Common myeloid progenitor, CD34-positive (primary cell): ENCODE measurements at regions of chr21 and their contacts with region 1.

Region 1: GRCh38 chr21:34603002-34603709 is 11.8 kb downstream of the RCAN1 start:
- DNase-seq: peak; percentile 63 to 83 (median 80)
- H3K4me3 ChIP-seq: no peak overlapping the region
- H3K27ac ChIP-seq: no peak overlapping the region
- H3K4me1 ChIP-seq: no peaks in the 10 kb centered on the region
- H3K27me3 ChIP-seq: no peaks in the 10 kb centered on the region

Region 2: GRCh38 chr21:34510148-34511142 is 92.7 kb before region 1 on chr21:
- CTCF ChIA-PET with region 1: interaction called, 44 read pairs
- POLR2A ChIA-PET with region 1: no interaction called
- DNase-seq: peak; percentile 57 to 79 (median 69)
- H3K4me3 ChIP-seq: no peak overlapping the region
- H3K27ac ChIP-seq: no peak overlapping the region
- H3K4me1 ChIP-seq: peaks cover 0 to 15% (median 1%) of the 10 kb centered on the region in 4 experiments
- H3K27me3 ChIP-seq: no peaks in the 10 kb centered on the region

Region 3: DNA sequence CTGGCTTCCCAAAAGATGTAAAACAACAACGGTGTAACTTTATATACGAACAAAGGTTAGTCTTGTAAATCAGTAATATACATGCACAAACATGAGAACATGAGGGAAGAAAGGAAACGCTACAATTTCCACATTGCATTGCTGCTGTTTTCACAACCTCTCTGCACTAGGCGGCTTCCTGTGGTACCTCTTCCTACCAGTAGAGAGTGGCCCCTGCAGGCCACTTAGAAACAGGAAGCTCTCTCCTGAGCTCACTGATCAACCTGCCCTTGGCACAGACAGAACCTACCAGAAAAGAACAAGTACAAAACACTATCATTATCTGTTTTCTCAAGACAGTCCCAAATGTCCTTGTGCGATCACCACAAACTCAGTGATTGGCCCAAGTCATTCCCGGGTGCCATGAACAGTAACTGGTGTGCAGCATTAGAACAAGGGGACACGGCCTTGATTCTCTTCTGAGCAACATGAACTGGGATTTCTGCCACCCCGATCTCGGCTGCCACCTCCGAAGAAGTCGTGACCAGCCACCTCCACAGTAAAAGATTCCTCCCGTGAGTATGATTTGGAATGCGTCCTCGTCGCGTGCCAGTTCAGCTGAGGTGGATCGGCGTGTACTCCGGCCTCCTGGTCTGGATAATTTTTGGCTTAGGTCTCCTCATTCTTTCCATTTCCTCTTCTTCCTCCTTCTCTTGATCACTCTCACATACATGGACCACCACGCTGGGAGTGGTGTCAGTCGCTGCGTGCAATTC is 85.5 kb before region 1 on chr21:
- CTCF ChIA-PET with region 1: interaction called, 14 read pairs
- POLR2A ChIA-PET with region 1: no interaction called
- DNase-seq: peak in 2 of 3 donors; percentile 55 to 64
- H3K4me3 ChIP-seq: no peak overlapping the region
- H3K27ac ChIP-seq: no peak overlapping the region
- H3K4me1 ChIP-seq: peaks cover 0 to 31% (median 11%) of the 10 kb centered on the region in 4 experiments
- H3K27me3 ChIP-seq: no peaks in the 10 kb centered on the region

Region 4: GRCh38 chr21:34592120-34592955 is 10.8 kb before region 1 on chr21:
- CTCF ChIA-PET with region 1: interaction called, 21 read pairs
- POLR2A ChIA-PET with region 1: no interaction called
- DNase-seq: peak in 1 of 3 donors; percentile 16
- H3K4me3 ChIP-seq: peak overlapping the region in 1 of 7 experiments; percentile 2
- H3K27ac ChIP-seq: no peak overlapping the region
- H3K4me1 ChIP-seq: peaks cover 0 to 16% (median 7%) of the 10 kb centered on the region in 4 experiments
- H3K27me3 ChIP-seq: peaks cover 0 to 3% (median 0%) of the 10 kb centered on the region in 5 experiments

Region 5: GRCh38 chr21:34702341-34703170 is 99.4 kb after region 1 on chr21:
- CTCF ChIA-PET with region 1: no interaction called
- POLR2A ChIA-PET with region 1: no interaction called
- DNase-seq: no peak
- H3K4me3 ChIP-seq: no peak overlapping the region
- H3K27ac ChIP-seq: no peak overlapping the region
- H3K4me1 ChIP-seq: peaks cover 0 to 5% (median 3%) of the 10 kb centered on the region in 4 experiments
- H3K27me3 ChIP-seq: peaks cover 0 to 4% (median 0%) of the 10 kb centered on the region in 5 experiments